CD4-positive, alpha-beta T cell (primary cell): ENCODE measurements at regions of chr22 and their contacts with region 1.

Region 1: GRCh38 chr22:48369789-48370507 is 1457.7 kb downstream of the BRD1 start:
- DNase-seq: no peak
- ATAC-seq: no peak
- H3K4me3 ChIP-seq: no peak overlapping the region
- H3K4me3 Mint-ChIP-seq: no peak overlapping the region
- H3K27ac ChIP-seq: no peak overlapping the region
- H3K27ac Mint-ChIP-seq: no peak overlapping the region
- H3K4me1 ChIP-seq: no peaks in the 10 kb centered on the region
- H3K4me1 Mint-ChIP-seq: no peaks in the 10 kb centered on the region
- H3K27me3 ChIP-seq: peaks cover 6% of the 10 kb centered on the region in 2 experiments
- H3K27me3 Mint-ChIP-seq: peaks cover 11% of the 10 kb centered on the region
- CTCF ChIP-seq: no peak

Region 2: DNA sequence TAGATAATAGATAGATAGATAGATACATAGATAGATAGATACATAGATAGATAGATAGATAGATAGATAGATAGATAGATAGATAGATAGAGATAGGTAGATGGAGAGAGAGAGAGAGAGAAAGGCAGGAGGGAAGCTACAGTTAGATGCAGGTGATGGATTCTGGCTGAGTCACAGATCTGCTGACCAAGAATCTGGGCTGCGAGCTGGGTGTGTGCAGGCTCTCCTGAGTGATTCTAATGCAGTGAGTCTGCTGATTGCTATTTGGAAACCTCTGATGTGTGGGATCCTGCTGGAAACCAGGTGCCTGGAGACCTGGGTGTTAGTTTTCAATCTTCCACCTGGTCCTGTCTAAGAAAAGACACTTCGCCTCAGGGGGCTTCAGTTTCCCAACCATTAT is 165.7 kb before region 1 on chr22:
- CTCF ChIA-PET with region 1: no interaction called
- POLR2A ChIA-PET with region 1: no interaction called
- intact Hi-C with region 1: no loop called
- DNase-seq: no peak
- ATAC-seq: no peak
- H3K4me3 ChIP-seq: no peak overlapping the region
- H3K4me3 Mint-ChIP-seq: no peak overlapping the region
- H3K27ac ChIP-seq: no peak overlapping the region
- H3K27ac Mint-ChIP-seq: no peak overlapping the region
- H3K4me1 ChIP-seq: no peaks in the 10 kb centered on the region
- H3K4me1 Mint-ChIP-seq: no peaks in the 10 kb centered on the region
- H3K27me3 ChIP-seq: peaks cover 0 to 8% of the 10 kb centered on the region in 2 experiments
- H3K27me3 Mint-ChIP-seq: no peaks in the 10 kb centered on the region
- CTCF ChIP-seq: no peak

Region 3: DNA sequence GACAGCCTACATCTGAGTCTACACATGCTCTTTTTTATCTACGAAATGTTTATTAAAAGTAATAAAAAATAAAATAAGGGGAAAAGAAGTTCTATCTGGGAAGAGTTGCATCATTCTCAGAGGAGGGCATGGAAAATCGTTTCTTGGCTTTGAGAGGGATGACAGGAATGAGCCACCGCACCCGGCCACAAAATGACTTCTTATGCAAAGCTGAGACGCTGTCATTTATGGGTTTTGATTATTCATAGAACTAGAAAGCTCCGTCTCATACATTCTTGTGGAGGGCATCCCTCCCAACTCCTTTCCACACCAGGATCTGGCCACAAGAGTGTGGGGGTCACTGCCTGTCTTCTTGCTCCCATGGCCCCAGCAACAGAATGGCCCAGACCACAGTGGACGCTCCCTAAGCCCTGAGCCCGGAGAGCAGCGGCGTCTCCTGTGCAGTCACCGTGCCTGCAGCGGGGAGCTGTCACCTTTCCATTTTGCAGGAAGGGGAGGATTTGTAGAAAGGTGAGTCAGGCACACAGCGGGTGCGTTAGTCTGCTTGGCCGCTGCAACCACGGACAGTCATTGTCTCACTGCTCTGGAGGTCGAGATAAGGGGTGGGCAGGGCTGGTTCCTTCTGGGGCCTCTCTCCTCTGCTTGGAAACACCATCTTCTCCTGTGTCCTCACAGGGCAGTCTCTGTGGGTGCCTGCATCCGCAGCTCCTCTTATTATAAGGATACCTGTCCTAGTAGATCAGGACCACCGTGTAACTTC is 69.0 kb after region 1 on chr22:
- CTCF ChIA-PET with region 1: no interaction called
- POLR2A ChIA-PET with region 1: no interaction called
- intact Hi-C with region 1: loop called in 1 of 2 experiments (anchors 2 kb)
- DNase-seq: no peak
- ATAC-seq: no peak
- H3K4me3 ChIP-seq: no peak overlapping the region
- H3K4me3 Mint-ChIP-seq: no peak overlapping the region
- H3K27ac ChIP-seq: no peak overlapping the region
- H3K27ac Mint-ChIP-seq: no peak overlapping the region
- H3K4me1 ChIP-seq: no peaks in the 10 kb centered on the region
- H3K4me1 Mint-ChIP-seq: no peaks in the 10 kb centered on the region
- H3K27me3 ChIP-seq: no peaks in the 10 kb centered on the region
- H3K27me3 Mint-ChIP-seq: no peaks in the 10 kb centered on the region
- CTCF ChIP-seq: no peak